Endothelial cell of umbilical vein (primary cell): ENCODE measurements at regions of chr2 and their contacts with region 1.

Region 1: DNA sequence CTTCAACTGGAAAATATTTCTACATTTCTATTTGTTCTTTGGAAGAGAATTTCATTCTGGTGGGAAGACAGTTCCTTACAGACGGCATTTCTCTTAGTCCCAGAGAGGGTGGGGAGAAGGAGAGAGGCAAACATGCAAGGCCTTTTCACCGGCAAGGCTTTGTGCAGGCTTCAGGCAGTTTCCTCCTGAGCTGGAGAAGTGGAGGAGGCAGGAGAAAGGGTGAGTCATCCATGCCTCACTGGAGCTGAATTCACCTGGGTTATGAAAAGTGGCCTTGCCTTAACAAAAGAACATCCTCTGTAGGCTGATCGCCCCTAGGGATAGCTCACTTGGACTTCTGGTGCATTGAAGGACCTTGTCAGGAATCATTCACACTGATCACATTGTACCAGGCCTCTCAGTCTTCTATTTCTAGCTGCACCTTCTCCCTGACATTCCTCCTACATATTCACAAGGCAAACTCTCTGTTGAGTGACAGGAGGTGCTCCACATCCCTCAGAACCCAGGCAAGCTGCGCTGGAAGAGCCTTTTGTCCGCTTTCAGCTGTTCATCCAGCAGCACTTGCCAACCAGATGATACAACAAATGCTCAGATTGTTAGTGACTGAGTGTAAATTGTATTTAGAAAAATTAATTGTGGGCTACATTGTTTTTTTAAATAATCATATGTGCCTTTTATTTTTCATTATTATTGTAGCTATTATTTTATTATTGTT is 796.1 kb downstream of the DCDC2C start:
- DNase-seq: peak; percentile 50
- H3K4me3 ChIP-seq: no peak overlapping the region
- H3K27ac ChIP-seq: peak overlapping the region; percentile 31
- H3K4me1 ChIP-seq: peaks cover 27% of the 10 kb centered on the region
- H3K27me3 ChIP-seq: no peaks in the 10 kb centered on the region
- CTCF ChIP-seq: no peak
- POLR2A ChIP-seq: no peak

Region 2: GRCh38 chr2:4047961-4048891 is 451.2 kb before region 1 on chr2:
- CTCF ChIA-PET with region 1: no interaction called
- POLR2A ChIA-PET with region 1: no interaction called
- dilution Hi-C with region 1: no loop called
- intact Hi-C with region 1: loop called (anchors 5 kb)
- DNase-seq: peak; percentile 77
- H3K4me3 ChIP-seq: no peak overlapping the region
- H3K27ac ChIP-seq: peak overlapping the region; percentile 76
- H3K4me1 ChIP-seq: peaks cover 19% of the 10 kb centered on the region
- H3K27me3 ChIP-seq: no peaks in the 10 kb centered on the region
- CTCF ChIP-seq: no peak
- POLR2A ChIP-seq: no peak

Region 3: DNA sequence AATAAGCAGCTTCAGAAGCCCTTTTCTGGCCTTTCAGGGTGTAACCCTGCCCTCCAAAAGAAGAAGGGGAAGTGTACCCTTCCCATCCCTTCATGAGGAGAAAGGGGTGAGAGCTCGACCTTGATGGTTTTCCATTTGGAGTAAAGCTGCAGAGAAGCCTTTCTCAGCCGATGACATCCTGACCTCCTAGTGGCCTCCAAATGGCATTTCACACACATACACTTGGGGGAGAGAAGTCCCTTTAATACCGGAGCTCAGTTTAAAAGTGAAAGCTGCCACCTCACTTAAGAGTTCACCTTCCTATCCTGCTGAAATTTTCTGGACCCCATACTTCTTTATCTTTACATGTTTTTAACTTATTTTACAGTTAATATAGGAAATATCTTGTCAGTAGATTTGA is 79.4 kb before region 1 on chr2:
- CTCF ChIA-PET with region 1: no interaction called
- POLR2A ChIA-PET with region 1: no interaction called
- dilution Hi-C with region 1: no loop called
- intact Hi-C with region 1: loop called (anchors 1 kb)
- DNase-seq: no peak
- H3K4me3 ChIP-seq: peak overlapping the region in 1 of 3 experiments; percentile 15
- H3K27ac ChIP-seq: peak overlapping the region; percentile 48
- H3K4me1 ChIP-seq: peaks cover 25% of the 10 kb centered on the region
- H3K27me3 ChIP-seq: no peaks in the 10 kb centered on the region
- CTCF ChIP-seq: no peak
- POLR2A ChIP-seq: no peak

Region 4: GRCh38 chr2:4515871-4516761 is 16.6 kb after region 1 on chr2:
- CTCF ChIA-PET with region 1: no interaction called
- POLR2A ChIA-PET with region 1: no interaction called
- dilution Hi-C with region 1: no loop called
- intact Hi-C with region 1: loop called (anchors 2 kb)
- DNase-seq: peak; percentile 81
- H3K4me3 ChIP-seq: no peak overlapping the region
- H3K27ac ChIP-seq: no peak overlapping the region
- H3K4me1 ChIP-seq: peaks cover 6% of the 10 kb centered on the region
- H3K27me3 ChIP-seq: no peaks in the 10 kb centered on the region
- CTCF ChIP-seq: no peak
- POLR2A ChIP-seq: no peak

Region 5: DNA sequence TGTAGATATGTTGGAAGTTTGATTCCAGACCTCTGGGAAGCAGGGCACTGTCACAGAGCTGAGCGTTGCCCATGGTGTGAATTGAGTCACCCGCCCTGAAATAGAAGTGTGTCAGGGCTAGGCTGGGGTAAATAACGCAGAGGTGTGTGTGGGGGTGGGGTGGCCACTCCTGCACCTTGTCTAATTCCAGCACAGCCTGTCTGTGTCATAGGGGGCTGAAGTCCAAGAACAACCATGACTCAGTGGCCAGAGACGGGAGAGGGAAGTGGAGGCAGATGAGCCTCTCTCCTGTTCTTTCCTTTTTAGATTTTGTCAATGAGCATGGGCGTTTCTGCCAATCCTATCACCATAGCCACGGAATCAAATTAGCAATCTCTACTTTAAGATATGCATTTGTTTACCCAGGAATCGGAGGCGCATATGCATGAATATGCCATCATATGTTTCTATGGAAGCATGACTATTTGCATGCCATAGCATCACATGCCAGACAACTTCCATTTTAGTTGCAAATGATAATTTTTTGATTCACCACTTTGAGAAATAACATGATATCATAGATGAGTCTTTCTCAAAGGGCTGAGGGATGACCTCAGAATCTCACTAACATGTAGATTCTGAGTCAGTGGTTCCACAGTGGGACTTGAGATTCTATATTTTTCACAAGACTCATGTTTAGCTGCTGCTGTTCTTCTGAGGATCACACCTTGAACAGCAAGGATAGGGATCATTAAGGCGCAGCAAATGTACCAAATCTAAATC is 56.8 kb after region 1 on chr2:
- CTCF ChIA-PET with region 1: no interaction called
- POLR2A ChIA-PET with region 1: no interaction called
- dilution Hi-C with region 1: no loop called
- intact Hi-C with region 1: loop called (anchors 1 kb)
- DNase-seq: peak; percentile 61
- H3K4me3 ChIP-seq: no peak overlapping the region
- H3K27ac ChIP-seq: peak overlapping the region; percentile 69
- H3K4me1 ChIP-seq: peaks cover 15% of the 10 kb centered on the region
- H3K27me3 ChIP-seq: no peaks in the 10 kb centered on the region
- CTCF ChIP-seq: no peak
- POLR2A ChIP-seq: no peak

Region 6: GRCh38 chr2:4662161-4662779 is 162.8 kb after region 1 on chr2:
- CTCF ChIA-PET with region 1: no interaction called
- POLR2A ChIA-PET with region 1: no interaction called
- dilution Hi-C with region 1: no loop called
- intact Hi-C with region 1: loop called (anchors 1 kb)
- DNase-seq: peak; percentile 88
- H3K4me3 ChIP-seq: no peak overlapping the region
- H3K27ac ChIP-seq: peak overlapping the region; percentile 91
- H3K4me1 ChIP-seq: peaks cover 18% of the 10 kb centered on the region
- H3K27me3 ChIP-seq: no peaks in the 10 kb centered on the region
- CTCF ChIP-seq: no peak
- POLR2A ChIP-seq: no peak

Region 7: DNA sequence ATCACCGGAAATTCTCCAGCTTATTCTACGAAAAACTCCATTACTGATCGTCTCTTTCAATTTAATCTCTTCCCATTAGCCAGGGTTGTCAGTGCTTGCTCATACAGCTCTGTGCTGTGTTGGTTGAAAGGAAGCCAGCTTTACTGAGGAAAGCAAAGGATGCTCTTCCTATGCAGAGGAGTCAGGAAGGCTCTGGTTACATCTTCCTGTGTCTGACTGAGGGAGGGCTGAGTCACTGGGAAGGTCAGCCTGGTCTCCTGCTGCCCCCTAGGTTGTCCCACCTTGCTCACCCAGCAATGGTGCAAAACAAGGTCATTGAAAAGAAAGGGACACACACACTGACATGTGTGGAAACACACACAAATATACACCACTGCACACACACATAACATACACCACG is 179.5 kb after region 1 on chr2:
- CTCF ChIA-PET with region 1: no interaction called
- POLR2A ChIA-PET with region 1: no interaction called
- dilution Hi-C with region 1: no loop called
- intact Hi-C with region 1: loop called (anchors 1 kb)
- DNase-seq: no peak
- H3K4me3 ChIP-seq: no peak overlapping the region
- H3K27ac ChIP-seq: no peak overlapping the region
- H3K4me1 ChIP-seq: peaks cover 6% of the 10 kb centered on the region
- H3K27me3 ChIP-seq: no peaks in the 10 kb centered on the region
- CTCF ChIP-seq: no peak
- POLR2A ChIP-seq: no peak